Gastrocnemius medialis (tissue), 4 donors: ENCODE measurements at regions of chr17 and their contacts with region 1.

Region 1: DNA sequence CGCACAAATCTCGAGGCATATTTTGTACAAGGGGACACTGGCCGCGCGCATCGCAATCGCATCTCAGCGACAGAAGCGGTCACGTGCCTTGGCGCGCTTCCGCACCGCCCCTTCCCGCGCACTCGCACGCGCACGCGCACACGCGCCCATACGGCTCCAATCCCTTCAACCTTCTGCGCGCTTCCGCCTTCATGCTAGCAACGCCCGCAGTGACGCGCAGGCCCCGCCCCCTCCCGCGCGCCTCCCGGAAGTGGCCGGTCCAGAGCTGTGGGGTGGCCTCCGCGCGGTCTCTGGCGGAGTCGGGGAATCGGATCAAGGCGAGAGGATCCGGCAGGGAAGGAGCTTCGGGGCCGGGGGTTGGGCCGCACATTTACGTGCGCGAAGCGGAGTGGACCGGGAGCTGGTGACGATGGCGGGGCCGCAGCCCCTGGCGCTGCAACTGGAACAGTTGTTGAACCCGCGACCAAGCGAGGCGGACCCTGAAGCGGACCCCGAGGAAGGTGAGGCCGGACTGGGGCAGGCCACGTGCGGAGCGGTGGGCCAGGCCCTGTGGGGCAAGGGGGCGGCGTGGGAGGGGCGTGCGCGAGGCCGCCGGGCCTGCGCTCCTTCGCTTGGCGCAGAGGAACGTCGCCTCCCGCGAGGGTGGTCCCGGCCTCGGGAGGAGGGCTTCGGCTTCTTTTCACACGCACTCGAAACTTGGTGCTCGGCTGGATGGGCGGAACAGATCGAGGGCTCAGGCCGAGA is at the start of gene AATF:
- DNase-seq: peak; percentile 89 to 93
- ATAC-seq: peak; percentile 96 to 98
- H3K4me3 ChIP-seq: peak within 1 kb of the TSS; percentile 68 to 96 (median 86)
- H3K27ac ChIP-seq: peak within 1 kb of the TSS; percentile 78 to 92 (median 84)
- H3K4me1 ChIP-seq: peaks cover 15 to 19% of the 10 kb centered on the region in 2 donors
- H3K27me3 ChIP-seq: peaks cover 38 to 41% (median 41%) of the 10 kb centered on the region in 3 donors
- CTCF ChIP-seq: no peak
- POLR2A ChIP-seq: peak; percentile 50 to 74
- total RNA-seq, gene AATF: 30.3 to 50.5 (median 40.9) TPM

Region 2: DNA sequence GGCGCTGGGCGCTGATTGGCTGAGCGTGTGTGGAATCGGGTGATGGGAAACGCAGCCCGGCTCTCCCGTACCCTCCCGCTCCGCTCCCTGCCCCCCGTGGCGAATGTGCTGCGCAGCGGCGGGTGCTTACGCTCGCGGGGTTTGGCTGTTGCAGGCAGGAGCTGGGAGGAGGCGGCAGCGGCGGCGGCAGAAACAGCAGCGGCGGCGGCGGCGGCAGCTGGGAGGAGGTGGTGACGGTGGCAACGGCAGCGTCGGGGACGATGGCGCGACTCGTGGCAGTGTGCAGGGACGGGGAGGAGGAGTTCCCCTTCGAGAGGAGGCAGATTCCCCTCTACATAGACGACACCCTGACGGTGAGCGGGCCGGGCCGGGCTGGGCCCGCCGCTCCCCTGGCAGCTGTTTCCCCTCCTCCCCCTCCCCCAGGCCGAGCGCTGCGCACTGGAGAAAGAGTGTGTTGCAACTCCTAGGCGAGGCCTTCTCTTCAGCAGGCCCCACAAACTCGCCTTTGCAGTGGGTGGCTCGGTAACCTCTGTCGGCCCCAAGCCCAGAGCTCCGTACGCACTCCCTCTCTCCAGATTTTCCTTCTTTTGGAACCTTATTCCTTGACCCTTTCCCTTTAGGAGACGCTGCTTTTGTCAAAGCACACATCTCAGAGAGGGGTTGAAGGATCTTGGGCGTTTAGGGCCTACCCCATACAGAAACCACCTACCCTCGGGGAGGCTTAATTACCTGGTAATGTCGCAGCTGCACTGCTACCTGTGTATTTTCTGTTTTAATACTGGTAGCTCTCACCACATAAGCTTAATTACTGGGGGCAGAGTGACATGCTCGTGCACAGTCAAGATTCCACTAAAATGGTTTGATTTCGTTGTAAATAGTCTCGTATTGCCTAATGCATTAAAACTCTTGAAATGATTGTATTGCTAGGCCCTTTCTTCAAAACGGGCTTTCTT is 403.1 kb before region 1 on chr17:
- in situ Hi-C with region 1: no loop called
- intact Hi-C with region 1: loop called (anchors 5 kb)
- DNase-seq: peak; percentile 94 to 98
- ATAC-seq: peak; percentile 77 to 82
- H3K4me3 ChIP-seq: peak overlapping the region; percentile 79 to 100 (median 94)
- H3K27ac ChIP-seq: peak overlapping the region; percentile 99 to 100 (median 100)
- H3K4me1 ChIP-seq: peaks cover 44 to 45% of the 10 kb centered on the region in 2 donors
- H3K27me3 ChIP-seq: no peaks in the 10 kb centered on the region
- CTCF ChIP-seq: peak in 1 of 5 experiments; percentile 26
- POLR2A ChIP-seq: peak; percentile 83 to 92

Region 3: DNA sequence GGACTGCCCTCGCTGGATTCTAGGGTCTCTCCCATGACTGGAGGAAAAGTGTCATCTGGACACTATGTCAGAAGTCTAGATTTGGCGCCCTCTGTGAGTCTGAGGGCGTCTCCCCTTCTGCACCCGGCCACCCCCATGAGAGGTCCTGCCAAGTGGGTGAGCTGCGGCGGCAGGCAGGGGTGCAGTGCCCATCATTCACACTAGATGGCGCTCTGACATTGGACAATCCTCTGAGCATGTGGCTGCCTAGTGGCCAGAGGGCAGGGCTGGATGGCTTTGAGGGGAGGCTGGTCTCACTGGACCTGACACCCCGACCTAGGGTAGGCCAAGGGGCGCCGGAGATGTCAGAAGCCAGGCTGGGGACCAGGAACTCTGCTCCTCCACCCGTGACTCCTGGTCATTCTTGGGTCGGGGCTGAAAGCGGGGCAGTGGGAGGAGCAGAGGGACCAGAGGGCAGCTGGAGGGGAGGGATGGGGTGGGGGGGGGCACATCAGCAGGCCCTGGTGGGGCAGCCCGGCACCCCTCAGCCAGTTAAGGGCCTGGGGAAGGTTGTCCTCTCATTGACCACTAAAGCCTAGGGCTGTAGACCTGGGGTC is 319.5 kb before region 1 on chr17:
- in situ Hi-C with region 1: loop called in 2 of 4 experiments (anchors 25 kb)
- intact Hi-C with region 1: no loop called
- DNase-seq: peak; percentile 41 to 60
- ATAC-seq: peak; percentile 85 to 87
- H3K4me3 ChIP-seq: no peak overlapping the region
- H3K27ac ChIP-seq: no peak overlapping the region
- H3K4me1 ChIP-seq: peaks cover 0 to 2% of the 10 kb centered on the region in 2 donors
- H3K27me3 ChIP-seq: peaks cover 0 to 8% (median 0%) of the 10 kb centered on the region in 3 donors
- CTCF ChIP-seq: peak; percentile 86 to 98 (median 92)
- POLR2A ChIP-seq: no peak

Region 4: DNA sequence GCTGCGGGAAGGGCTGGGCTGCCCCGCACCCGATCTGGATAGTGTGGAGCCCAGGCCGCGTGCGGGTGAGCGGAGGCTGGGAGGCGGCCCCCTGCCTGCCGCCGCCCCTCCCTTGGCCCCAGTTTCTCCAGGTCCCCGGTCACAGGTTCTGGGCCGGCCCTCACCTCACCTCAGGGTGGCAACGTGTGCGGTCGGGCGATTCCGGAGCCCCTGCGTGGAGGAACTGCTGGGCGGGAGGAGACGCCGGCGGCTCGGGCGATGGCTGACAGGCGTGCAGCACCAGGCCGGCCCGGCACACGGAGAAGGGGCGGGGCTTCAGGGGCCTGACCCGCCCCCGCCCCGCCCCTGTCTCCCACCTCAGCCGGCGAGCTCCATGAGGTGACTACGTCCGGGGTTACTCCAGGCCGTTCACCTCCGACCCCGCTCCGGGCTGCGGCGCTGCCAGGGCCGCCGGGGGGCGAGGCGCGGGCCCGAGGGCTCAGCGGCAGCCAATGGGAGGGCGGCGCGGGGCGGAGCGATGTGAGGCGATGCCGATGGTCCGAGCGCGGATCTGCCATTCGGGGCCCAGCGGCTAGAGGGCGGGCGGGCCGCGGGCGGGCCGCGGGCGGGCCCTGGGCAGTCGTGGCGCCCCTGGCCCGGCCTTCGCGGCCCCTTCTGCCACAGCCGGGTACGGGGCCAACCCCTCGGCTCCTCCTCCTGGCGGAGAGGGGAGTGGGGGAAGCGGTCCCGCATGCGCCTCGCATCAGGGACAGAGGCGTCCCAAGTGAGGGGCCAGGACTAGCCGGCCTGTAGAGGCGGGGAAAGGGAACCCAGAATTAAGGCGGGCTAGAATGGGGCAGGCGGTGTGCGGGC is 410.2 kb after region 1 on chr17:
- in situ Hi-C with region 1: no loop called
- intact Hi-C with region 1: loop called (anchors 1 kb)
- DNase-seq: peak; percentile 89 to 96
- ATAC-seq: peak; percentile 87
- H3K4me3 ChIP-seq: peak overlapping the region; percentile 86 to 96 (median 94)
- H3K27ac ChIP-seq: peak overlapping the region; percentile 93 to 98 (median 96)
- H3K4me1 ChIP-seq: peaks cover 19 to 22% of the 10 kb centered on the region in 2 donors
- H3K27me3 ChIP-seq: no peaks in the 10 kb centered on the region
- CTCF ChIP-seq: peak in 4 of 5 experiments; percentile 31 to 65 (median 59)
- POLR2A ChIP-seq: peak; percentile 87 to 93